Activated CD8-positive, alpha-beta T cell treated with anti-CD3 and anti-CD28 coated beads, Interleukin-2, amount 10 ng/mL, durations not matched to agents 7 days and 5 days (primary cell): ENCODE measurements at regions of chr2 and their contacts with region 1.

Region 1: GRCh38 chr2:161223139-161223732 is 63.0 kb downstream of the TANK start:
- DNase-seq: peak; percentile 39
- ATAC-seq: no peak
- H3K4me3 Mint-ChIP-seq: no peak overlapping the region
- H3K27ac Mint-ChIP-seq: no peak overlapping the region
- H3K4me1 Mint-ChIP-seq: peaks cover 2% of the 10 kb centered on the region
- H3K27me3 Mint-ChIP-seq: no peaks in the 10 kb centered on the region

Region 2: DNA sequence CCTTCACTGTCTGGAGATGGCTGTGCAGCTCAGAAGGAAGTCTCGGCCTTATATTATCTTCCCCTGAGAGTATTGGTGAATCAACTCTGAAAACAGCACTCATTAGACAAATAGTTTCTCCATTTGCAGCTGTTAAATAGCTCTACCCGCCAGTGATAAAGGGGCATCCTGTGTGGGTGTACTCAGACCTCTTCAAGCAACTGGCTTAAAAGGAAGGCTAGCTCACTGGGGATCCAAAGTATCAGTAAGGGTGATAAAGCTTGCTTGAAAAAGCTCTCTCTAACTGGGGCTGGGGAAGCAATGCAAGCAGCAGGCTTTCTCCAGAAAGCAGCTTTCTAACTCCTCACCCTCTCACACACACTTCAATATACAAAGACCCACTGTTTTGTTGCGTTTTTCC is 20.1 kb after region 1 on chr2:
- CTCF ChIA-PET with region 1: interaction called, 16 read pairs
- POLR2A ChIA-PET with region 1: interaction called, 3 read pairs
- DNase-seq: no peak
- ATAC-seq: no peak
- H3K4me3 Mint-ChIP-seq: peak overlapping the region; percentile 81
- H3K27ac Mint-ChIP-seq: peak overlapping the region; percentile 71
- H3K4me1 Mint-ChIP-seq: peaks cover 47% of the 10 kb centered on the region
- H3K27me3 Mint-ChIP-seq: peaks cover 14% of the 10 kb centered on the region

Region 3: DNA sequence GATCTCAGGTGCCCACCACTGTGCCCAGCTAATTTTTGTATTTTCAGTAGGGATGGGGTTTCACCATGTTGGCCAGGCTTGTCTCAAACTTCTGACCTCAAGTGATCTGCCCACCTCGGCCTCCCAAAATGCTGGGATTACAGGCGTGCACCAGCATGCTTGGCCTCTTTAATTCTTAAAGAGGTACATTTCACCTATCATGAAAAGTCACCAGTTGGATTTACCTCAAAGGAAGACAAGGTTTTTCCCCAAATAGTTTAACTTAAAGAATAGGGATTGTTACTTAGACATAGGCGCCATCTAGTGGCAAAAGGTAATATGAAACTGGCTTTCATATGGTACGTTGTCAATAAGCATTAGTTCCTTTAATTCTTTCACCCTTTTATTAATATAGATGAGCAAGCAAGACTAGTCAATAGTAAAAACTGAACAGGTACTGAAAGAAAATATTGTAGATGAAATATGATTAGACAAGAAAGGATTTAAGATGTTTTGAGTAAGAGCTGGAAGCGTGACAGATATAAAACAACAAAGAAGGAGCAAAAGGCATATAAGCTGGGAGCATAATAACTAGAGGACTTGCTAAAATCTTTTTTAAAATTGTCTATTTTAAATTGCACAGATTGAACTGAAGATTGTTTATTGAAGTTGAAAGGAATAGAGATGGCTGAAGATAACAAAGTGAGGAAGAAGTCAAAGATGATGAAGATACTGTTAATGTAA is 50.0 kb after region 1 on chr2:
- CTCF ChIA-PET with region 1: interaction called, 15 read pairs
- POLR2A ChIA-PET with region 1: no interaction called
- DNase-seq: peak; percentile 55
- ATAC-seq: peak; percentile 65
- H3K4me3 Mint-ChIP-seq: no peak overlapping the region
- H3K27ac Mint-ChIP-seq: no peak overlapping the region
- H3K4me1 Mint-ChIP-seq: peaks cover 3% of the 10 kb centered on the region
- H3K27me3 Mint-ChIP-seq: peaks cover 23% of the 10 kb centered on the region

Region 4: GRCh38 chr2:161545870-161546269 is 322.6 kb after region 1 on chr2:
- CTCF ChIA-PET with region 1: no interaction called
- POLR2A ChIA-PET with region 1: no interaction called
- DNase-seq: no peak
- ATAC-seq: no peak
- H3K4me3 Mint-ChIP-seq: no peak overlapping the region
- H3K27ac Mint-ChIP-seq: no peak overlapping the region
- H3K4me1 Mint-ChIP-seq: no peaks in the 10 kb centered on the region
- H3K27me3 Mint-ChIP-seq: peaks cover 2% of the 10 kb centered on the region